AG04449 (cell line): ENCODE measurements at regions of chr5 and their contacts with region 1.

Region 1: DNA sequence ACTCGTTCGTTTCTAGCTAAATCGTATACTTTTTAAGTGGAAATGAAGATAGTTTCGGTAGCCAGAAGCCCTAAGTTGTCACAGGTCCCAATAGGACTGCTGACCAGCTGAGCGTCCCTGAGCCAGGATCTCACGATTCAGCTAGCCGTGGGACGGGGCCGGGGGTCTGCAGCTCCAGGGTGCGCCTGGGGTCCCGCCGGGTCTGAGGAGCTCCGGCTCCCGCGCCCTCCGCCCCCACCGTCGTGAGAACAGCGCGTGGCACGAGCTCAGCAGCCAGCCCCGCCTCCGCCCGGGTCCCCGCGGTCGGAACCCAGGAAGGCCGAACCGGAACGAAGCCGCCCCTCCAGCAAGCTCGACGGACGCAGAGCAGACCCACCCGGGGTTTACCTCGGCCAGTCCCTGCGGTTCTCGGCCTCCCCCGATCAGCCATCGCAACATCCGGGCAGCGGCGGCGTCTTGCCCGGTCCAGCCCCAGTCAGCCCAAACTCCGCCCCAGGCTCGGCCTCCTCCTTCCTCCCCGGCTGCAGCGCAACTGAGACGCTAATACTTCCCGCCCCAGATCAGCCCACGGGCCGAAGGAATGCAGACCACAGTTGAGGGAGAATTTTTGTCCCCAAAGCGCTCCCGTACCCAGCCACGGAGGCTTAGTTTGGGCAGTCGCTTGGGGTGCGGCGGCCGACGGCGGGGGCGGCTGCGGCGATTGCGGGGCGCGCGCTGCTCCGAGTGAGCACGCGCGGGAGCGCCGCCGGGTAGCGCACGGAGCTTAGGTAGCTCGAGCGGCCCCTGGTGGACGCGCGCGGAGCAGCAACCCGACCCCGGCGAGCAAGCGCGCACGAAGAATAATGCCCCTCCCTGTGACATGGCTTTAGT is at the start of gene WDR41:
- DNase-seq: peak; percentile 86
- H3K4me3 ChIP-seq: peak within 1 kb of the TSS; percentile 88
- CTCF ChIP-seq: peak; percentile 96

Region 2: GRCh38 chr5:77076961-77077823 is 414.8 kb before region 1 on chr5:
- CTCF ChIA-PET with region 1: interaction called, 11 read pairs
- POLR2A ChIA-PET with region 1: interaction called, 5 read pairs
- DNase-seq: no peak
- H3K4me3 ChIP-seq: peak overlapping the region; percentile 56
- CTCF ChIP-seq: peak; percentile 72

Region 3: GRCh38 chr5:77129391-77129990 is 362.5 kb before region 1 on chr5:
- CTCF ChIA-PET with region 1: interaction called, 22 read pairs
- POLR2A ChIA-PET with region 1: no interaction called
- DNase-seq: no peak
- H3K4me3 ChIP-seq: no peak overlapping the region
- CTCF ChIP-seq: peak; percentile 71

Region 4: DNA sequence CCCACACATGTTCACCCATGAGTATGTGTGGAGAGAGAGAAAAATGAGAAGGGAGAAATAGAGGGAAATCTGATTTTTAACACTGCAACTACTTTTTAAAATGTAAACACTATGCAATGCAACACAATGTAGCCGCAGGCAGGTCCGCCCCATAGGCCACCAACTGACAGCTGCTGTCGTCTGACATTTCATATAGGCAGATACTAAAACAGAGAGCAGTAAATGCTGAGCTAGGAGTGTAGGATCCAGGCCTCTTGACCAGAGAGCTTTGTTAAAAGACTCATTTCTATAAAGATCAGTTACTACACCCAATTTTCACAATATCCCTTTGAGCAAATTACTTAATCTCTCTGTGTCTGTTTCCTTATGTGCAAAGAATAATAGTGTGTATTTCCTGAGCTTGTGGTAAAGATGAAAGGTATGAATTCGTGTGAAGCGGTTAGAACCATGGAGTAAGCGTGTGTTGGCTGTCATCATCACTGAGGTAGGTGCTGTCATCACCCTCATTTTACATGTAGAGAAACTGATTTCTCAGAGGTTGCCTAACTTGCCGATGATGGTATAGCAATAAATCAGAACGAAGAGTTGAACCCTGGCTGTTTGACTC is 336.7 kb before region 1 on chr5:
- CTCF ChIA-PET with region 1: interaction called, 11 read pairs
- POLR2A ChIA-PET with region 1: no interaction called
- DNase-seq: no peak
- H3K4me3 ChIP-seq: no peak overlapping the region
- CTCF ChIP-seq: no peak

Region 5: GRCh38 chr5:77272206-77272605 is 219.8 kb before region 1 on chr5:
- CTCF ChIA-PET with region 1: no interaction called
- POLR2A ChIA-PET with region 1: no interaction called
- DNase-seq: no peak
- H3K4me3 ChIP-seq: no peak overlapping the region
- CTCF ChIP-seq: no peak

Region 6: DNA sequence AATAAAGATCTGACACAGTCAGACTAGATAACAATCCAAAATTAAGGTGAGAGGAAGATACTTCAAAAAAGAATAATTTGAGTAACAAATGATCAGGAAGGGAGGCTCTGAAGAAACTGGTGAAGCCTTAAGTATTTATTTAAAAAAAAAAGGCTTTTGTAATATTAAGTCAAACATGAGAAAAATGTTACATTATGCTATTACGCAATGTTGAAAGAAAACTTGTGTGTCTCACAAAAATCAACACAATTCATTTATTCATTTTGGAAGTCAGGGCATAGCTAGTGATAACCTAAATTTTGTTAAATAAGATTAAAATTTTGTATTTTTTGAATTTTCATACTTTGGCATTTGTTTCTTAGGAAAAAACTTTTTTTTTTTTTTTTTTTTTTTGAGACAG is 28.1 kb before region 1 on chr5:
- CTCF ChIA-PET with region 1: interaction called, 17 read pairs
- POLR2A ChIA-PET with region 1: no interaction called
- DNase-seq: no peak
- H3K4me3 ChIP-seq: no peak overlapping the region
- CTCF ChIP-seq: no peak